ENCODE measurements at regions of chr14 and their contacts with region 1.

Region 1: GRCh38 chr14:36941783-36942521 is 230.5 kb downstream of the SLC25A21 start:
- DNase-seq: peak; percentile 88
- ATAC-seq: peak; percentile 57
- H3K4me3 ChIP-seq: no peak overlapping the region
- H3K27ac ChIP-seq: peak overlapping the region; percentile 89
- H3K4me1 ChIP-seq: peaks cover 40% of the 10 kb centered on the region
- H3K27me3 ChIP-seq: no peaks in the 10 kb centered on the region
- CTCF ChIP-seq: peak; percentile 97

Region 2: GRCh38 chr14:36553656-36554260 is 388.2 kb before region 1 on chr14:
- CTCF ChIA-PET with region 1: interaction called, 8 read pairs
- POLR2A ChIA-PET with region 1: no interaction called
- intact Hi-C with region 1: loop called (anchors 2 kb)
- DNase-seq: peak; percentile 72
- ATAC-seq: peak; percentile 75
- H3K4me3 ChIP-seq: no peak overlapping the region
- H3K27ac ChIP-seq: no peak overlapping the region
- H3K4me1 ChIP-seq: no peaks in the 10 kb centered on the region
- H3K27me3 ChIP-seq: peaks cover 13% of the 10 kb centered on the region
- CTCF ChIP-seq: peak; percentile 79

Region 3: DNA sequence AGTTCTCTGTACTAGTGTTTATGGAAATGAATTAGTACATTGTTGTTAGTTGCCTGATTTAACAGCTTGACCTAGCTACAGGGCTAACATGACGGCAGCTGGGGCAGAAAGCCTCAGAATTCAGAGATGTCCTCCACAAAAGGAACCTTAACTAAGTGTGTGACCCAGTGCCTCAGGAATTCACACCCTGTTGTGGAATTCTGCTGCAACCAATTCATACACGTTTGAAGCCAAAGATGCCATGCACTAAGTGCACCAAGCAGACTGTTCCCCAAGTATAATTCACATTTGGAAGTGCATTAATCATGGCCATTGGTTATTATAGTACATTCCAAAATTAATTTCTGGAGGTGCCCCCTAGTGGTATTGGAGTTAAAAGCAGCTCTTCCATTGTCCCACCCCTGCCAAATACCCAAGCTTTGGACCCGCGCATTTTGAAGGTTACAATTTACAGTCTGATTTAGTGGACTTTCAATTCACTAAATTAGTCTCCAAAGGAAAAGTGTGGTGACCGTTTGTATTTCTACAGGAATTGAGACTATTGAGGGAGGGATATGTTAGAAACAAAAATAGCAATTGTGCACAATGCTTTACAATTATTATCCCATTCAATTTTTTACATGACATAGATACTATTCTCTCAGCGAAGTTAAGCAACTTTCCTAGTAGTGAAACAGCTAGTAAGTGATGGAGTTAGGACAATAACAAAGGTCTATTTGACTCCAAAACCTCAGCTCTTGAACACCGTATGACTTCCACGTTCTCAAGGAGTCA is 194.4 kb before region 1 on chr14:
- CTCF ChIA-PET with region 1: interaction called, 5 read pairs
- POLR2A ChIA-PET with region 1: no interaction called
- intact Hi-C with region 1: loop called (anchors 1 kb)
- DNase-seq: peak; percentile 66
- ATAC-seq: peak; percentile 60
- H3K4me3 ChIP-seq: no peak overlapping the region
- H3K27ac ChIP-seq: no peak overlapping the region
- H3K4me1 ChIP-seq: peaks cover 18% of the 10 kb centered on the region
- H3K27me3 ChIP-seq: no peaks in the 10 kb centered on the region
- CTCF ChIP-seq: peak; percentile 92

Region 4: GRCh38 chr14:36901861-36902260 is 40.1 kb before region 1 on chr14:
- CTCF ChIA-PET with region 1: interaction called, 3 read pairs
- POLR2A ChIA-PET with region 1: no interaction called
- intact Hi-C with region 1: loop called (anchors 2 kb)
- DNase-seq: peak; percentile 87
- ATAC-seq: peak; percentile 96
- H3K4me3 ChIP-seq: no peak overlapping the region
- H3K27ac ChIP-seq: peak overlapping the region; percentile 62
- H3K4me1 ChIP-seq: peaks cover 16% of the 10 kb centered on the region
- H3K27me3 ChIP-seq: no peaks in the 10 kb centered on the region
- CTCF ChIP-seq: no peak

Region 5: GRCh38 chr14:37034410-37035285 is 92.7 kb after region 1 on chr14:
- CTCF ChIA-PET with region 1: no interaction called
- POLR2A ChIA-PET with region 1: no interaction called
- intact Hi-C with region 1: loop called (anchors 2 kb)
- DNase-seq: no peak
- ATAC-seq: no peak
- H3K4me3 ChIP-seq: no peak overlapping the region
- H3K27ac ChIP-seq: no peak overlapping the region
- H3K4me1 ChIP-seq: peaks cover 30% of the 10 kb centered on the region
- H3K27me3 ChIP-seq: no peaks in the 10 kb centered on the region
- CTCF ChIP-seq: no peak

Region 6: GRCh38 chr14:37060493-37061260 is 118.7 kb after region 1 on chr14:
- CTCF ChIA-PET with region 1: no interaction called
- POLR2A ChIA-PET with region 1: no interaction called
- intact Hi-C with region 1: no loop called
- DNase-seq: no peak
- ATAC-seq: no peak
- H3K4me3 ChIP-seq: no peak overlapping the region
- H3K27ac ChIP-seq: no peak overlapping the region
- H3K4me1 ChIP-seq: no peaks in the 10 kb centered on the region
- H3K27me3 ChIP-seq: no peaks in the 10 kb centered on the region
- CTCF ChIP-seq: no peak

Region 7: DNA sequence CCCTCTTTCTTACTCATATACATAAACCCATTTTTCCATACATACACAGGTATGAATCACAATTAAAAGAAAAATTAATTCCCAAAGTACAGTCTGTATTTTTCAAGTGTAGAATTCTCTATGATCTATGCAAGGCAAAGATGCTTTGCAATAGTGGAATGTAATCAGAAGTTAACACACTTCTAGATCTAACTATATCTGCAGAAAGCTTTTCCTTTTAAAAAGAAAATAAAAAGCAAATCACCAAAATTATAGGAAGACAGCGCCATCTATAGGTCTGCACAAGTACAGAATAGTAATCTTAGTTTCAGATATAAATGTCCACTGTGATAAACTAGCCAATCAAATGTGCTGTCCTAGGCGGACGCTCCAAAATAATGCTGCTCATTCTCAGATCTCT is 208.5 kb after region 1 on chr14:
- CTCF ChIA-PET with region 1: interaction called, 3 read pairs
- POLR2A ChIA-PET with region 1: no interaction called
- intact Hi-C with region 1: loop called (anchors 1 kb)
- DNase-seq: peak; percentile 76
- ATAC-seq: peak; percentile 82
- H3K4me3 ChIP-seq: no peak overlapping the region
- H3K27ac ChIP-seq: no peak overlapping the region
- H3K4me1 ChIP-seq: peaks cover 5% of the 10 kb centered on the region
- H3K27me3 ChIP-seq: no peaks in the 10 kb centered on the region
- CTCF ChIP-seq: peak; percentile 90

Region 8: DNA sequence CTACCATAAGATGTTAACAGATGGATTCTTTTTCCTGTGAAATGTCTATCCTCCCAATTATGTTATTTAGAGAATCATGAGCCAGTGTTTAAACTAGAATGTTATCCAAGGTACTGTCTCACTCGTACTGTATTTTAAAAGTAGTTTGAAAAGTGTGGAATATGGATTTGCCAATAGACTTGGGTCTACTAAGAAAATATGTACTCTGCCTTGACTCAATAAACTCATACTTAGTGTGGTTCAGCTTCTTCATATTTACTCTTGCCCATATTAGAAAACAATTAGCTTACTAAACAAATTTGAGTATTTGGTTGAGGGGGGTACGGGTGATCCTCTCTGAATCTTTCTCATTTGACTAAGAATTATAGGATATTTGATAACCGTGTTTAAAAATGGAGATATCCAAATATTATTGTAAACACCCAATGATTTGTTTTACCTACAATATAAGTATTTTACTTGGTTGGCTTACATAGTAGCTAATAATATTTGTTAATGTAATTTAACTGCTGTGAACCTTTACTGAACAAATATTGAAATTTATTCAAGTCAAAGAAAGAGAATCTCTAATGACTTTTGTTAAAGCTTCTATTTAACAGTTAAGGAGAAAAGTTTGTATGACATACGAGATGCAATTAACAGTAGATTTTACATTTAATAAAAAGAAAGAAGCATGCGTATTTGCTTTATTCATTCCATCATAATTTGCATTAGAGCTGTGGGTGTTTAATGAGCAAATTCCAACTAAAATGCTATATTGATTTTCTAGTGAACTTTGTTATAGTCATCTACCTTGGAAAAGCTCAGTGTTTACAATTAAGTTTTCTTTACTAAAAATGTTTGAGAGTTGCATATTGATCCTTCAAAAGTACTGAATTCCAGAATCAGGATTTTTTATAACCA is 336.9 kb after region 1 on chr14:
- CTCF ChIA-PET with region 1: no interaction called
- POLR2A ChIA-PET with region 1: no interaction called
- intact Hi-C with region 1: no loop called
- DNase-seq: no peak
- ATAC-seq: peak; percentile 22; the same call in 1 of the 2 replicates
- H3K4me3 ChIP-seq: no peak overlapping the region
- H3K27ac ChIP-seq: no peak overlapping the region
- H3K4me1 ChIP-seq: no peaks in the 10 kb centered on the region
- H3K27me3 ChIP-seq: no peaks in the 10 kb centered on the region
- CTCF ChIP-seq: no peak

Measured in PC-3 (cell line).